ENCODE measurements at regions of chr1 and their contacts with region 1.

Region 1: GRCh38 chr1:89804642-89805237 is 16.1 kb upstream of the LRRC8D start:
- DNase-seq: peak; percentile 72
- H3K27ac ChIP-seq: no peak overlapping the region
- CTCF ChIP-seq: peak; percentile 94

Region 2: GRCh38 chr1:89945852-89946476 is 141.2 kb after region 1 on chr1:
- CTCF ChIA-PET with region 1: no interaction called
- POLR2A ChIA-PET with region 1: no interaction called
- DNase-seq: peak; percentile 26
- H3K27ac ChIP-seq: peak overlapping the region; percentile 57
- CTCF ChIP-seq: no peak

Region 3: GRCh38 chr1:89987170-89987819 is 182.6 kb after region 1 on chr1:
- CTCF ChIA-PET with region 1: interaction called, 15 read pairs
- POLR2A ChIA-PET with region 1: no interaction called
- DNase-seq: peak; percentile 61
- H3K27ac ChIP-seq: no peak overlapping the region
- CTCF ChIP-seq: peak; percentile 84